ENCODE measurements at regions of chr22 and their contacts with region 1.

Region 1: DNA sequence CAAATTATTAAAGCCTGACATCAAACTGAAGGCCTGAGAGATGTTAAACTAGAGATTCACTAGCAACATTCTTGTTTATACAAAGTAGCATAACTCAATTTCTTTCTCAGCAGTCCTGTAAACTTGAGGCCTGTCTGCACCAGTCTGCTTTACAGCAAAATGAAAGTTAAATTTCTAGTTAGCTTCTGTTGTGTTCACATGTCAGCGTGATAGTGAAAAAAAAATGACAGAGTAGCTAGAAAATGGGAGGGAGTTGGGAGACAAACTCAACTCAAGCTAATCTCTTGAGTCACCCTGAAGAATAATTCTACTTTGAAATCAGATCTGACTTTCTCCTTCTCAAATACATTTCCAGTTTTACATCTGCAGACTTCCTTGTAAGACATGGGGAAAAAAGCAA is 6.5 kb downstream of the RBFOX2 start:
- DNase-seq: no peak
- ATAC-seq: no peak
- H3K4me3 ChIP-seq: no peak overlapping the region
- H3K27ac ChIP-seq: peak overlapping the region in 6 of 12 donors; percentile 0 to 72 (median 42)
- H3K4me1 ChIP-seq: peaks cover 0 to 57% (median 36%) of the 10 kb centered on the region in 12 donors
- H3K27me3 ChIP-seq: no peaks in the 10 kb centered on the region
- CTCF ChIP-seq: no peak
- POLR2A ChIP-seq: no peak

Region 2: GRCh38 chr22:35947794-35948425 is 74.3 kb before region 1 on chr22:
- intact Hi-C with region 1: loop called in 3 of 10 experiments (anchors 5 kb)
- DNase-seq: no peak
- ATAC-seq: no peak
- H3K4me3 ChIP-seq: no peak overlapping the region
- H3K27ac ChIP-seq: no peak overlapping the region
- H3K4me1 ChIP-seq: peaks cover 0 to 27% (median 5%) of the 10 kb centered on the region in 12 donors
- H3K27me3 ChIP-seq: no peaks in the 10 kb centered on the region
- CTCF ChIP-seq: no peak
- POLR2A ChIP-seq: no peak

Region 3: GRCh38 chr22:35987487-35987886 is 34.7 kb before region 1 on chr22:
- intact Hi-C with region 1: loop called in 2 of 10 experiments (anchors 5 kb)
- DNase-seq: no peak
- ATAC-seq: no peak
- H3K4me3 ChIP-seq: no peak overlapping the region
- H3K27ac ChIP-seq: no peak overlapping the region
- H3K4me1 ChIP-seq: peaks cover 0 to 75% (median 34%) of the 10 kb centered on the region in 12 donors
- H3K27me3 ChIP-seq: no peaks in the 10 kb centered on the region
- CTCF ChIP-seq: no peak
- POLR2A ChIP-seq: no peak